ENCODE measurements at regions of chr7 and their contacts with region 1.

Region 1: GRCh38 chr7:123871998-123872867 is 27.3 kb downstream of the HYAL4 start:
- DNase-seq: peak; percentile 1
- H3K4me3 ChIP-seq: no peak overlapping the region
- H3K27ac ChIP-seq: no peak overlapping the region
- H3K27me3 ChIP-seq: no peaks in the 10 kb centered on the region
- CTCF ChIP-seq: peak; percentile 46

Region 2: GRCh38 chr7:123410273-123410904 is 461.8 kb before region 1 on chr7:
- CTCF ChIA-PET with region 1: no interaction called
- POLR2A ChIA-PET with region 1: no interaction called
- DNase-seq: no peak
- H3K4me3 ChIP-seq: no peak overlapping the region
- H3K27ac ChIP-seq: no peak overlapping the region
- H3K27me3 ChIP-seq: no peaks in the 10 kb centered on the region
- CTCF ChIP-seq: no peak

Region 3: DNA sequence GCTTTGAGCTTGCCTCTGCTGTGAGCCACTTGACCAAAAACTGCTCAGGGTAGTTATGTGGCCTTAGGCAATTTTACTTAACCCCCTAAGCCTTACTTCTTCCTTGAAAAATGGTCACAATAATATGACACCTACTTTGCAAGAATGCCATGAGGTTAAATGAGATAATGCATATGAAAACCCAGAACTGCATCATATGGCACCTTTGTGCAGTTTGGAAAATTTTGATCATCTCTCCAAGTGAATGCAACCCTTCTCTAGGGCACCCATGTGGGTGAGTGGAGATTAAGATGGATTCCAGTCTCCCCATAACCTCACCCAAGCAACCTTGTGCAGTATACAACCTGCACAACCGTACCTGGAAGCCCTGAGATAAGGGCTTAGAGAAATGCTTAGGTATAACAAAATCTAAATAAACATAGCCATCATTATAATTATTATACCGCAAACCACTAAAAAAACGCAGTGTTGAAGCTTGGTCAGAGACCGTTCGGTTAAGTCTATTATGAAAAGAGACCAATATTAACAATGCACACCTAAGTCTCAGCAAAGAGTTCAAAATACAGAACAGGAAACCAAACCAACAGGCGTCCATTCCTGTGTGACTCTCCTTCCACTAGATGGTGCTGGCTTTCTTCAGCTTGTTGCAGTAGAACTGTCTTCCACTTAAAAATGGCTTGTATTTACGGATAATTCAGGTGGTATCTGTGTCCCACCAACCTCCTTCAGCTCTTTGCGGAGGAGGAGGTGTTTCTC is 291.6 kb before region 1 on chr7:
- CTCF ChIA-PET with region 1: interaction called, 20 read pairs
- POLR2A ChIA-PET with region 1: no interaction called
- DNase-seq: no peak
- H3K4me3 ChIP-seq: no peak overlapping the region
- H3K27ac ChIP-seq: no peak overlapping the region
- H3K27me3 ChIP-seq: no peaks in the 10 kb centered on the region
- CTCF ChIP-seq: peak; percentile 82

Region 4: DNA sequence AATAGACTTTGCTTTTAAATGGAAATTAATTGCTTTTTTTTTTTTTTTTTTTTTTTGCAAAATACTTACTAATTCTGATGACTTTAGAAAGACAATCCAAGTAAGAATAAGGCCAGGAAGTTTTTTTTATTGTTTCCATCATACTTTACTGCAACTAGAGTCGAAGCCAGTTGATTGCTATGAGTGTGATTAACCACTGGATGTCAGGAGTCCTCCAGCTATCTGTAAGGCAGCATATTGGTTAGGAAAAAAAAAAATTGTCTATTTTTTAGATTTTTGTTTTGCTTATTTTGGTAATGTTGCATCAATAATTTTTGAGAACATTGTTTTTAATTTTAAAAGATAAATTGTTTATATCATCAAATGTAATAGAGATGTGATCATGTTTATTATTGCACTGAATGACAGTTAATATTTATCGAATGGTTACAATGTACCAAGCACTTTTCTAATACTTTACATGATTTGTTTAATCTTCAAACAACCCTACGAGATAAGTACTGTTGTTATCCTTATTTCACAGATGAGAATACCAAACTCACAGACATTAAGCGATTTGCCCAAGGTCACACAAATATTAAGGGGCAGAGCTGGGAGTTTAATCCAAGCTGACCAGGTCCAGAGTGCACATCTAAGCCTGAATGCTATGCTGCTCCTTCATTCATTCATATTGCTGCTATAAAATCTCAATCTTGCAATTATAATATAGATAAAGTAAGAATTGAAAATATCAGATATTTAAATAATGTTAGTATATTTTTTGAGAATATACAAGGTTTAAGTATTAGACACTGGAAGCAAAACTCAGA is 236.5 kb before region 1 on chr7:
- CTCF ChIA-PET with region 1: interaction called, 78 read pairs
- POLR2A ChIA-PET with region 1: no interaction called
- DNase-seq: no peak
- H3K4me3 ChIP-seq: no peak overlapping the region
- H3K27ac ChIP-seq: no peak overlapping the region
- H3K27me3 ChIP-seq: peaks cover 3% of the 10 kb centered on the region
- CTCF ChIP-seq: peak; percentile 71

Region 5: DNA sequence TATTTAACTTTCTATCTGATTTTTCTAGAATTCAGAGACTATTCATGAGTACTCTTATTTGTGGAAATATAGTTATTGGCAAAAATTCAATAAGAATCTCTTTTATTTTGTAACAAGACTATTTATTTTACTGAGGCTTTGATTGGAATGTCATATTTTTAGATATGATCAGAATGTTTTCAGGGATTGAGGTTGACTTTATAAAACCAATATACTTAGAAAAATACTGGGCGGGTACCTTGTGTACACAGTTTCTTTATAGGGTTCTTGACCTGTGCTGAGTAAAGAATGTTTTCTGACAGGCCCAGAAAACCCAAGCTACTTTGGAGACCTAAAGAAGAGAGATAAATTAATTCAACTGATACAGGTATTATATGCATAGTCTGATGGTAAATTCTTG is 28.8 kb after region 1 on chr7:
- CTCF ChIA-PET with region 1: no interaction called
- POLR2A ChIA-PET with region 1: no interaction called
- DNase-seq: no peak
- H3K4me3 ChIP-seq: no peak overlapping the region
- H3K27ac ChIP-seq: no peak overlapping the region
- H3K27me3 ChIP-seq: no peaks in the 10 kb centered on the region
- CTCF ChIP-seq: no peak

Measured in AG04450 (cell line).